Endothelial cell of umbilical vein (primary cell): ENCODE measurements at regions of chr16 and their contacts with region 1.

Region 1: DNA sequence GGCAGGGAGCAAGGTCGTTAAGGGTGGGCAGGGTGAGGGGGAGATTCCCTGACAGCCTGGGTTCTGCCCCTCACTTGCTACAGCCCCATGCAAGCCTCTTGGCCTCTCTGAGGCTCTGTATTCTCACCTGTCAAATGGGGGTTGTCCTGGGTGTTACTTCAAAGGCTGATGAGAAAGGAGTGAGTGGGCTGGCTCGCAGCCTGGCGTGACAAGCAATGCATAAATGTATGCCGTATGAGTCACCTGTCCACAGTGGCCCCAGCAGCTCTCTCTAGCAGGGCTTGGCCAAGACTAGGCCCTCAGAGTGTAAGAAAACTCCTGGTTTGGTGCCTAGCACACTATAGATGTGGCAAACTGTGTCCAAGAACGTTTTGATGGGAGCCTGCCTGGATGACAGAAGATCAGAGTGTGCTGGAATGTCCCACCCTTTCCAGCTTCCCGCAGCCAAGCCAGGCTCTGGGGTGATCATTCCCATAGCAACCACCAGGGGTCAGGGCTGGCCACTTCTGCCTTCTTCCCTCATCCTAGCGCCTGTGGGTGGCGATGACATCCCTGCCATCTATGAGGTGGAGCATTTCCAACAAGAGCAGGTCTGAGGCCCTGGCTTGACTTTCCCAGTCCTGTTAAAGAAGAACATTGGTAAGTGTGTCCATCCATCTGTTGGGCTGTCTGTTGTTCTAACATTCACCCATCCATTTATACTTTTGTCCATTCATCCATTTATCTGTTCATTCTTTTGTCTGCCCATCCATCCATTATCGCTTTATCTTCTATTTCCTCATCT is 37.2 kb upstream of the ADGRG1 start:
- DNase-seq: peak; percentile 74
- H3K4me3 ChIP-seq: no peak overlapping the region
- H3K27ac ChIP-seq: peak overlapping the region; percentile 32
- H3K4me1 ChIP-seq: peaks cover 12% of the 10 kb centered on the region
- H3K27me3 ChIP-seq: no peaks in the 10 kb centered on the region
- CTCF ChIP-seq: peak; percentile 92 to 95
- POLR2A ChIP-seq: no peak

Region 2: GRCh38 chr16:57576429-57576870 is 14.8 kb before region 1 on chr16:
- CTCF ChIA-PET with region 1: interaction called, 42 read pairs
- POLR2A ChIA-PET with region 1: no interaction called
- dilution Hi-C with region 1: no loop called
- intact Hi-C with region 1: loop called (anchors 1 kb)
- DNase-seq: peak; percentile 68
- H3K4me3 ChIP-seq: no peak overlapping the region
- H3K27ac ChIP-seq: no peak overlapping the region
- H3K4me1 ChIP-seq: no peaks in the 10 kb centered on the region
- H3K27me3 ChIP-seq: no peaks in the 10 kb centered on the region
- CTCF ChIP-seq: peak; percentile 96 to 99
- POLR2A ChIP-seq: no peak

Region 3: GRCh38 chr16:57634171-57634570 is 42.9 kb after region 1 on chr16:
- CTCF ChIA-PET with region 1: interaction called, 20 read pairs
- POLR2A ChIA-PET with region 1: no interaction called
- dilution Hi-C with region 1: no loop called
- intact Hi-C with region 1: no loop called
- DNase-seq: no peak
- H3K4me3 ChIP-seq: no peak overlapping the region
- H3K27ac ChIP-seq: peak overlapping the region; percentile 64
- H3K4me1 ChIP-seq: peaks cover 68% of the 10 kb centered on the region
- H3K27me3 ChIP-seq: no peaks in the 10 kb centered on the region
- CTCF ChIP-seq: no peak
- POLR2A ChIP-seq: no peak

Region 4: GRCh38 chr16:57653936-57654335 is 62.7 kb after region 1 on chr16:
- CTCF ChIA-PET with region 1: interaction called, 117 read pairs
- POLR2A ChIA-PET with region 1: no interaction called
- dilution Hi-C with region 1: no loop called
- intact Hi-C with region 1: loop called (anchors 1 kb)
- DNase-seq: peak; percentile 70
- H3K4me3 ChIP-seq: no peak overlapping the region
- H3K27ac ChIP-seq: peak overlapping the region; percentile 28
- H3K4me1 ChIP-seq: peaks cover 20% of the 10 kb centered on the region
- H3K27me3 ChIP-seq: no peaks in the 10 kb centered on the region
- CTCF ChIP-seq: no peak
- POLR2A ChIP-seq: no peak

Region 5: DNA sequence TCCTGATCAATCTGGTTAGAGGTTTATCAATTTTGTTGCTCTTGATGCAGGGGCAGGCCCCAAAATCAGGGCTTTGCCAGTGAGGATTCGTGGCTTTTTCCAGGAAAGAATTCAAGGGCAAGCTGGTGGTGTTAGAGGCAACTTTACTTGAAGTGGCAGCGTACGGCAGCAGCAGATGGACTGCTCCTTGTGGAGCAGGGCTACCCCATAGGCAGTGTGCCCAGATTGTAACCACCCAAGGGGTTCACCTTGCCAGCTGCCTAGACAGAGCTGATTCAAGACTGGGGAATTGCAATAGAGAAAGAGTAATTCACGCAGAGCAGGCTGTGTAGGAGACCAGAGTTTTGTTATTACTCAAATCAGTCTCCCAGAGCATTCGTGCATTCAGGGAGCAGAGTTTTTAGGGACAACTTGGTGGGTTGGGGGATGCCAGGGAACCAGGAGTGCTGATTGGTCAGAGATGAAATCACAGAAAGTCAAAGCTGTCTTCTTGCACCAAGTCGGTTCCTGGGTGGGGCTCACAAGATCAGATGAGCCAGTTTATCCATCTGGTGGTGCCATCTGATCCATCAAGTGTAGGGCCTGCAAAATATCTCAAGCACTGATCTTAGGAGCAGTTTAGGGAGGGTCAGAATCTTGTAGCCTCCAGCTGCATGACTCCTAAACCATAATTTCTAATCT is 120.2 kb after region 1 on chr16:
- CTCF ChIA-PET with region 1: interaction called, 21 read pairs
- POLR2A ChIA-PET with region 1: no interaction called
- dilution Hi-C with region 1: no loop called
- intact Hi-C with region 1: no loop called
- DNase-seq: no peak
- H3K4me3 ChIP-seq: no peak overlapping the region
- H3K27ac ChIP-seq: no peak overlapping the region
- H3K4me1 ChIP-seq: no peaks in the 10 kb centered on the region
- H3K27me3 ChIP-seq: peaks cover 20 to 34% of the 10 kb centered on the region in 2 experiments
- CTCF ChIP-seq: no peak
- POLR2A ChIP-seq: no peak

Region 6: DNA sequence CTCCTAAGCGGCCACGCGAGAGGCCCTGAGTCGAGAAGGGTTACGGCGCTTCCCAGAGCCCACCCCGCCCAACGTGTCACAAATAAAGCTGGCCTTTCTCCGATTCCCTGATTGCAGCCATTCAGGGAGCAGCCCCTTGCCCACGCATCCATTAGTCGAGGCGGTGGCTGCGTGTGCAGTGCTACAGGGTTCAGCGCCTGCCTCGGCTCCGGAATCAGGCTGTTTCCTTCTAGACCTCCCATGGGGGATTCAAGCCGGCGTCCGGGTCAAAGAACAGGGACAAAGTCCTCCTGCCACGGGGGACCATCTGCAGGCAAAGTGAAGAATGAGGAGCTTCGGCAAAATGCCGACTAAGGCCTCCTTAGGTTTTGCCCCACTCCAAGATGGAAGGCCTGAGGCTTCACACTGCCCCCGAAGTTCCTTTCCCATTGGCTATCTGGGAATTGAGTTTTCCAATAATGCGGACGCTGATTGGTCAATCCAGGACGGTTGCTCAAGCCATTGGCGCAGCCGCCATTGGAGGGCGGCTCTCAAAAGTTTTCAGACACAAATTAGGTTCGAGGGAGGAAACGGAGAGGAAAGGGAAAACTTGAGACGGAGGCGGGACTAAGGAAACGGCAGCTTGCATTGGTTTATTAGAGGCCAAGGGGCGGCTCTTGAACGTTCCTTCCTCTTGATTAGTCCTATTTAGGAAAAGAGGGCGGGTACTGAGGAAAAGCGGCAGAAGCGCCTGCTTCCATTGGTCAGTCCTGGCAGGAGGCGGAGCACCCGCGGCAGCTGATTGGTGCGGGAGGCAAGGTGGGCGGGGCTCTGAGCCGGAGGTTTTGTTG is 143.9 kb after region 1 on chr16:
- CTCF ChIA-PET with region 1: interaction called, 29 read pairs
- POLR2A ChIA-PET with region 1: no interaction called
- dilution Hi-C with region 1: no loop called
- intact Hi-C with region 1: loop called (anchors 1 kb)
- DNase-seq: peak; percentile 100
- H3K4me3 ChIP-seq: peak overlapping the region; percentile 72 to 93 (median 74)
- H3K27ac ChIP-seq: peak overlapping the region; percentile 81
- H3K4me1 ChIP-seq: peaks cover 19% of the 10 kb centered on the region
- H3K27me3 ChIP-seq: no peaks in the 10 kb centered on the region
- CTCF ChIP-seq: no peak
- POLR2A ChIP-seq: peak; percentile 58

Region 7: GRCh38 chr16:57795431-57795878 is 204.2 kb after region 1 on chr16:
- CTCF ChIA-PET with region 1: no interaction called
- POLR2A ChIA-PET with region 1: no interaction called
- dilution Hi-C with region 1: no loop called
- intact Hi-C with region 1: no loop called
- DNase-seq: peak; percentile 31
- H3K4me3 ChIP-seq: no peak overlapping the region
- H3K27ac ChIP-seq: no peak overlapping the region
- H3K4me1 ChIP-seq: peaks cover 12% of the 10 kb centered on the region
- H3K27me3 ChIP-seq: no peaks in the 10 kb centered on the region
- CTCF ChIP-seq: peak; percentile 19 to 45
- POLR2A ChIP-seq: no peak